OCI-LY7 (cell line): ENCODE measurements at regions of chr6 and their contacts with region 1.

Region 1: DNA sequence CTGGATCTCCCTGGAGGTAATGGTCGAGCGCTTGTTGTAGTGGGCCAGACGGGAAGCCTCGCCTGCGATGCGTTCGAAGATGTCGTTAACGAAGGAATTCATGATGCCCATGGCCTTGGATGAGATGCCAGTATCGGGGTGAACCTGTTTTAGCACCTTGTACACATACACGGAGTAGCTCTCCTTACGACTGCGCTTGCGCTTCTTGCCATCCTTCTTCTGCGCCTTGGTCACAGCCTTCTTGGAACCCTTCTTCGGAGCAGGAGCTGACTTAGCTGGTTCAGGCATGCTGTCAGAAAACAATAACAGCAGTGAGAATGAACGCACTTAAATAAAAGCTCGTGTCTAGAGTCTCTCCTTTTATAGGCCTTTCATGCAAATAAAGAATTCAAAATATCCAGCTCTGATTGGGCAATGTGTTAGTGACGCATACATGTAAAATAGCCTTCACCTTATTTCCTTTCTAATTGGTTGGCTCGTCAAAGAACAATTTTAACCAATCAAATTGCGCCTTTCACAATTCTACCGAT is 129.2 kb downstream of the HFE start:
- DNase-seq: peak; percentile 98
- H3K4me3 ChIP-seq: peak overlapping the region; percentile 79
- H3K27ac ChIP-seq: peak overlapping the region; percentile 99
- H3K4me1 ChIP-seq: peaks cover 63% of the 10 kb centered on the region
- CTCF ChIP-seq: no peak

Region 2: DNA sequence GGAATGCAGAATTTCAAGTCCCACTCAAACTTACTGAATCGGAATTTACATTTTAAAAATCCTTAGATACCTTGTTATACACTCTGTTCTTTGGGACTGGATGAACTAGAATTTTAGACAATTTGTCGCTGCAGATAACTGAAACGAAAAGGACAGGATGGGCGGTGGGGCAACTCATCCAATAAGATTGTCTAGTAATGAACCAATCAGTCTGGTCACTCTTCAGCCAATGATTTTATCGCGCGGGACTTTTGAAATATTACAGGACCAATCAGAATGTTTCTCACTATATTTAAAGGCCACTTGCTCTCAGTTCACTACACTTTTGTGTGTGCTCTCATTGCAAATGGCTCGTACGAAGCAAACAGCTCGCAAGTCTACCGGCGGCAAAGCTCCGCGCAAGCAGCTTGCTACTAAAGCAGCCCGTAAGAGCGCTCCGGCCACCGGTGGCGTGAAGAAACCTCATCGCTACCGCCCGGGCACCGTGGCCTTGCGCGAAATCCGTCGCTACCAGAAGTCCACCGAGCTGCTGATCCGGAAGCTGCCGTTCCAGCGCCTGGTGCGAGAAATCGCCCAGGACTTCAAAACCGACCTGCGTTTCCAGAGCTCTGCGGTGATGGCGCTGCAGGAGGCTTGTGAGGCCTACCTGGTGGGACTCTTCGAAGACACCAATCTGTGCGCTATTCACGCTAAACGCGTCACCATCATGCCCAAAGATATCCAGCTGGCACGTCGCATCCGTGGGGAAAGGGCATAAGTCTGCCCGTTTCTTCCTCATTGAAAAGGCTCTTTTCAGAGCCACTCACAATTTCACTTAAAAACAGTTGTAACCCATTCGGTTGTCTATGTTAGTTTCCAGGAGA is 171.1 kb before region 1 on chr6:
- CTCF ChIA-PET with region 1: no interaction called
- POLR2A ChIA-PET with region 1: interaction called, 11 read pairs
- intact Hi-C with region 1: no loop called
- DNase-seq: peak; percentile 97
- H3K4me3 ChIP-seq: peak overlapping the region; percentile 67
- H3K27ac ChIP-seq: peak overlapping the region; percentile 99
- H3K4me1 ChIP-seq: peaks cover 66% of the 10 kb centered on the region
- CTCF ChIP-seq: peak; percentile 54

Region 3: GRCh38 chr6:26204332-26205165 is 11.9 kb before region 1 on chr6:
- CTCF ChIA-PET with region 1: no interaction called
- POLR2A ChIA-PET with region 1: interaction called, 505 read pairs
- intact Hi-C with region 1: loop called (anchors 1 kb)
- DNase-seq: peak; percentile 98
- H3K4me3 ChIP-seq: peak overlapping the region; percentile 79
- H3K27ac ChIP-seq: peak overlapping the region; percentile 93
- H3K4me1 ChIP-seq: peaks cover 63% of the 10 kb centered on the region
- CTCF ChIP-seq: peak; percentile 61

Region 4: GRCh38 chr6:26285143-26286134 is 69.0 kb after region 1 on chr6:
- CTCF ChIA-PET with region 1: no interaction called
- POLR2A ChIA-PET with region 1: interaction called, 41 read pairs
- intact Hi-C with region 1: loop called (anchors 1 kb)
- DNase-seq: peak; percentile 99
- H3K4me3 ChIP-seq: peak overlapping the region; percentile 80
- H3K27ac ChIP-seq: peak overlapping the region; percentile 96
- H3K4me1 ChIP-seq: peaks cover 32% of the 10 kb centered on the region
- CTCF ChIP-seq: 0 out of 2 replicates have a peak, but pooled peaks have one; percentile 0

Region 5: GRCh38 chr6:26431258-26432172 is 215.1 kb after region 1 on chr6:
- CTCF ChIA-PET with region 1: no interaction called
- POLR2A ChIA-PET with region 1: no interaction called
- intact Hi-C with region 1: no loop called
- DNase-seq: no peak
- H3K4me3 ChIP-seq: no peak overlapping the region
- H3K27ac ChIP-seq: no peak overlapping the region
- H3K4me1 ChIP-seq: no peaks in the 10 kb centered on the region
- CTCF ChIP-seq: no peak

Region 6: DNA sequence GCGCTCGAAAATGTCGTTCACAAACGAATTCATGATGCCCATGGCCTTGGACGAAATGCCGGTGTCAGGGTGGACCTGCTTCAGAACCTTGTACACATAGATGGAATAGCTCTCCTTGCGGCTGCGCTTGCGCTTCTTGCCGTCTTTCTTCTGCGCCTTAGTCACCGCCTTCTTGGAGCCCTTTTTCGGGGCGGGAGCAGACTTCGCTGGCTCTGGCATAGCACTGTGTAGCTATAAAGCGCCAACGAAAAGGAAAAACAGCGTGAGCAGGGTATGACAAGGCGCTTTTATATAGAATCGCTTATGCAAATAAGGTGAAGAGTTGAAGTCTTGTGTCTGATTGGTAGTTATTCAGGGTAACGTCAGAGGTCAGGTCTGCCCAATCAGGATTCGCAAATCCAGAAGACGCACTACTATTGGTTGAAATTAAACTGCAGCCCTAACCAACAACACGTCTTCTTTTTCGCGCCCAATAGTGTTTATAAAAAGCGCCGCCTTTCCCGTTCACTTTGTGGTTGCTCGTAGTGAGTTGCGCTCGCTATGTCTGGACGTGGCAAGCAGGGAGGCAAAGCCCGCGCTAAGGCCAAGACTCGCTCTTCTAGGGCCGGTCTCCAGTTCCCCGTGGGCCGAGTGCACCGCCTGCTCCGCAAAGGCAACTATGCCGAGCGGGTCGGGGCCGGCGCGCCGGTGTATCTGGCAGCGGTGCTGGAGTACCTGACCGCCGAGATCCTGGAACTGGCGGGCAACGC is 916.3 kb after region 1 on chr6:
- CTCF ChIA-PET with region 1: no interaction called
- POLR2A ChIA-PET with region 1: interaction called, 7 read pairs
- intact Hi-C with region 1: loop called (anchors 5 kb)
- DNase-seq: peak; percentile 98
- H3K4me3 ChIP-seq: peak overlapping the region; percentile 79
- H3K27ac ChIP-seq: peak overlapping the region; percentile 99
- H3K4me1 ChIP-seq: peaks cover 74% of the 10 kb centered on the region
- CTCF ChIP-seq: no peak

Region 7: GRCh38 chr6:27359231-27359630 is 1142.8 kb after region 1 on chr6:
- CTCF ChIA-PET with region 1: no interaction called
- POLR2A ChIA-PET with region 1: no interaction called
- intact Hi-C with region 1: no loop called
- DNase-seq: no peak
- H3K4me3 ChIP-seq: no peak overlapping the region
- H3K27ac ChIP-seq: no peak overlapping the region
- H3K4me1 ChIP-seq: no peaks in the 10 kb centered on the region
- CTCF ChIP-seq: no peak

Region 8: GRCh38 chr6:27871924-27872638 is 1655.7 kb after region 1 on chr6:
- CTCF ChIA-PET with region 1: no interaction called
- POLR2A ChIA-PET with region 1: interaction called, 14 read pairs
- intact Hi-C with region 1: loop called (anchors 5 kb)
- DNase-seq: peak; percentile 95
- H3K4me3 ChIP-seq: peak overlapping the region; percentile 69
- H3K27ac ChIP-seq: peak overlapping the region; percentile 99
- H3K4me1 ChIP-seq: peaks cover 71% of the 10 kb centered on the region
- CTCF ChIP-seq: peak; percentile 44